ENCODE measurements at regions of chr9 and their contacts with region 1.

Region 1: GRCh38 chr9:133532937-133533668 is 1.4 kb upstream of the ADAMTSL2 start:
- DNase-seq: peak; percentile 78 to 83
- ATAC-seq: peak; percentile 37 to 76 (median 62)
- H3K4me3 ChIP-seq: no peak overlapping the region
- H3K27ac ChIP-seq: peak overlapping the region in 2 of 10 donors; percentile 0 to 81
- H3K4me1 ChIP-seq: peaks cover 19 to 68% (median 30%) of the 10 kb centered on the region in 9 donors
- H3K27me3 ChIP-seq: peaks cover 0 to 50% (median 3%) of the 10 kb centered on the region in 7 donors
- CTCF ChIP-seq: peak; percentile 26 to 70 (median 59)

Region 2: GRCh38 chr9:133492061-133493021 is 40.8 kb before region 1 on chr9:
- intact Hi-C with region 1: no loop called
- DNase-seq: no peak
- ATAC-seq: peak; percentile 22 to 63 (median 43)
- H3K4me3 ChIP-seq: no peak overlapping the region
- H3K27ac ChIP-seq: peak overlapping the region in 9 of 10 donors; percentile 31 to 69 (median 46)
- H3K4me1 ChIP-seq: peaks cover 10 to 27% (median 20%) of the 10 kb centered on the region in 9 donors
- H3K27me3 ChIP-seq: peaks cover 0 to 14% (median 0%) of the 10 kb centered on the region in 7 donors
- CTCF ChIP-seq: no peak

Region 3: DNA sequence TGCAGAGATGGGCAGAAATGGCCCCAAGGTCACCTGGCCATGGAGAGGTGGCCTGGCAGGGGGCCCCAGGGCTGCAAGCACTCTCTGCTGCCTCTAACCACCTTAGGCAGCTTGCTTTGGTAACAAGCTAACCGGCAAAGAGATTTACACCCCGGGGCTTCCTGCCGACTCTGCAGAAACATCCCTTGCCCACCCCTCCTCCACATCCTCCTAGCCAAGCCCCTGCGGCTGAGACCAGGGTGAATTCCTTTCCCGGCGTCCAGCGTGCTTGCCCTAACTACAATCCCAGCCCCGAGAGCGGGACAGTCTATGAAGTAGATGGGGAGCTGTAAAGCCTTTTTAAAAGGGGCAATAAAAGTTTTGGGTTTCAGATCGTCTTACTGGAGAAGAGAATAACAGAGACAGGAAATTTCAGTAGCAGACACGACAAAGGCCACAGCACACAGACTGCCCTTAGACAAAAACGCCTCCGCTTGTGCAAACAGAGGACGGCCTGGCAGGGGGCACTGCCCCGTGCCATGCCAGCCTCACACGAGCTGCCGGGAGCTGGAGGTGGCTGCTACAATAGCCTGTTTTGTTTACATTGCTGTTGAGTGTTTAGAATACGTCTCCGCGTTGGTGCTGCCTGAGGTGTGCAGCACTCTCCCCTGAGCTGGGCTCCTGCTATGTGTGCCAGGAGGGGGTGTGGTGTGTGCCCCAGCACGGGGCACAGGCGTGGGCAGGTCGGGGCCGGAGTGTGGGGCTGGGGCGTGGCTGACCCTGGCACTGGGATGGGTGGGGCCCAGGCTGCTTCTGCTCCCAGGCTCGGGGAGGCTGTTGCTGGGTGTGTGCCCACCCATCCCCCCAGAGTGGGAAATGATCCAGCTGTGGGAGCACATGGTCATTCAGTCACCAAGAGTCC is 23.7 kb before region 1 on chr9:
- intact Hi-C with region 1: no loop called
- DNase-seq: peak in 1 of 2 donors; percentile 13
- ATAC-seq: no peak
- H3K4me3 ChIP-seq: no peak overlapping the region
- H3K27ac ChIP-seq: peak overlapping the region in 2 of 10 donors; percentile 8 to 20
- H3K4me1 ChIP-seq: peaks cover 8 to 51% (median 37%) of the 10 kb centered on the region in 9 donors
- H3K27me3 ChIP-seq: no peaks in the 10 kb centered on the region
- CTCF ChIP-seq: no peak

Region 4: GRCh38 chr9:133576875-133577736 is 44.0 kb after region 1 on chr9:
- intact Hi-C with region 1: loop called in 3 of 10 experiments (anchors 5 kb)
- DNase-seq: peak in 1 of 2 donors; percentile 45
- ATAC-seq: peak in 6 of 8 donors; percentile 7 to 50 (median 40)
- H3K4me3 ChIP-seq: peak overlapping the region in 6 of 10 donors; percentile 4 to 34 (median 24)
- H3K27ac ChIP-seq: peak overlapping the region in 2 of 10 donors; percentile 5 to 50
- H3K4me1 ChIP-seq: peaks cover 2 to 53% (median 24%) of the 10 kb centered on the region in 9 donors
- H3K27me3 ChIP-seq: peaks cover 0 to 45% (median 16%) of the 10 kb centered on the region in 7 donors
- CTCF ChIP-seq: no peak

Region 5: DNA sequence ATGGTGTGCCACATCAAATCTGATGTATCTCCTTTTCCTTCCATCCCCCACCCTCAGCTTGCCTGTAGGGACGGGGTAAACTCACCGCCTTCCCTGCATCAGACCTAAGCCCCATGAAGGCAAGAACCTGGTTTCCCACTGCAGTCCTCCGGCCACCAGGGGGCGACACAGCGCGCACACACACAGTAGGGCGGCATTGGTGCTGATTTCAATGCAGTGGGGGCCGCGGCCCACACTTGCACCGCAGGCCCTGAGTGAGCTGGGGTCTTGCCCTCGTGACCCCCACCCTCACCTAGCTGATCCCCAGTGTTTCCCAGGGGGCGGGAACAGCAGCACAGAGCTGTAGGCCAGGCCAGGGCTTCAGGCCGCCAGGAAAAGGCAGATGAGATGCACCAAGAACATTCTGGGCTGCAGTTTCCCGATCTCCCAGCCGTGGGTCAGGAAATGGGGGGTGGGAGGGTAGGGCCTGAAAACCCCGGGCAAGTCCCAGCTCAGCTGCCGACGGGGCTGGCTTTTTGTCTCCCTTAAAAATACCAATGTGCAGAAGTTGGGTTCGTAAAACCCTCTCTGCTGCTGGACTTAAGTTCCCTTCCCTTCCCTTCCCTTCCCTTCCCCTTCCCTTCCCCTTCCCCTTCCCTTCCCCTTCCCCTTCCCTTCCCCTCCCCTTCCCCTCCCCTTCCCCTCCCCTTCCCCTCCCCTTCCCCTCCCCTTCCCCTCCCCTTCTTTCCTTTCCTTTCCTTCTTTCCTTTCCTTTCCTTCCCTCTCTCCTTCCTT is 56.5 kb after region 1 on chr9:
- intact Hi-C with region 1: loop called in 2 of 10 experiments (anchors 5 kb)
- DNase-seq: no peak
- ATAC-seq: no peak
- H3K4me3 ChIP-seq: no peak overlapping the region
- H3K27ac ChIP-seq: no peak overlapping the region
- H3K4me1 ChIP-seq: peaks cover 0 to 17% (median 12%) of the 10 kb centered on the region in 9 donors
- H3K27me3 ChIP-seq: peaks cover 0 to 54% (median 33%) of the 10 kb centered on the region in 7 donors
- CTCF ChIP-seq: peak in 8 of 9 donors; percentile 28 to 61 (median 48)

Region 6: GRCh38 chr9:133703591-133704399 is 170.7 kb after region 1 on chr9:
- intact Hi-C with region 1: no loop called
- DNase-seq: peak in 1 of 2 donors; percentile 3
- ATAC-seq: no peak
- H3K4me3 ChIP-seq: no peak overlapping the region
- H3K27ac ChIP-seq: no peak overlapping the region
- H3K4me1 ChIP-seq: peaks cover 11 to 40% (median 32%) of the 10 kb centered on the region in 9 donors
- H3K27me3 ChIP-seq: peaks cover 11 to 37% (median 32%) of the 10 kb centered on the region in 7 donors
- CTCF ChIP-seq: no peak

Region 7: DNA sequence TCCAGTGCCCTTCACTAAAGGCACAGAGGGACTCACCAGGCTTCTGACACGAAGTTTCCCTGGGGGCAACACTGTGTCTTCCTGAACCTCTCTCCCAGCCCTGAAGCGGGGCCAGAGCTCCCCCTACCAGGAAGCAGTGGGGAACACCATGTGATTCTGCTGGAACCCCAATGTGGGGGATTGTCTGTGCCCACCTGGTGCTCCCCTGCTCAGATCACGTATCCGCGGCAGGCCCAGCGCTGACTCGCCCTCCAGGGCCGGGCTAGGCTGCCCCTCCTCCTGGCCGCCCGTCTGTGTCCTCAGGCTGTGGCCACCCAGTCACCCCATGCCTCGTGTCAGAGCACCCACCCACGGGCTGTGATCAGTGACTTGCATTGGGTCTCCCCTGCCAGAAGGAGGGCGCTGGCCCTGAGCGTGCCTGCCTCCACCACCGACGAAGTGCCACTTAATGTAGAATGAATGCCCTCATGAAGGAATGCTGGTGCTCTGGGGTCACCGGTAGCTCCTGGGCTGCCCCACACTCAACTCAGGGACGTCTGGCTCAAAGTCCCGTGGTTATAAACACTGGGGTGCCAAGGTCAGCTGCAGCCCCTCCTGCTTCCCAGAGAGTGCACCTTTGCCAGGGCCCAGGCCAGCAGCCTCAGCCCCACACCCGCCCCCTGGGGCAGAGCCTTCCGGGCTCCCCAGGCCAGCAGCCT is 182.9 kb after region 1 on chr9:
- intact Hi-C with region 1: loop called in 1 of 10 experiments (anchors 2 kb)
- DNase-seq: no peak
- ATAC-seq: peak; percentile 4 to 54 (median 28)
- H3K4me3 ChIP-seq: no peak overlapping the region
- H3K27ac ChIP-seq: peak overlapping the region in 8 of 10 donors; percentile 45 to 78 (median 58)
- H3K4me1 ChIP-seq: peaks cover 5 to 36% (median 18%) of the 10 kb centered on the region in 9 donors
- H3K27me3 ChIP-seq: peaks cover 0 to 34% (median 31%) of the 10 kb centered on the region in 7 donors
- CTCF ChIP-seq: peak in 8 of 9 donors; percentile 23 to 67 (median 53)

Region 8: GRCh38 chr9:133726401-133727276 is 193.5 kb after region 1 on chr9:
- intact Hi-C with region 1: loop called (anchors 1 to 5 kb)
- DNase-seq: peak; percentile 62 to 65
- ATAC-seq: peak; percentile 60 to 90 (median 79)
- H3K4me3 ChIP-seq: no peak overlapping the region
- H3K27ac ChIP-seq: no peak overlapping the region
- H3K4me1 ChIP-seq: no peaks in the 10 kb centered on the region
- H3K27me3 ChIP-seq: peaks cover 0 to 47% (median 27%) of the 10 kb centered on the region in 7 donors
- CTCF ChIP-seq: peak; percentile 39 to 78 (median 65)

Measured in heart right ventricle (tissue), 16 donors.